Calu3 (cell line): ENCODE measurements at regions of chr15 and their contacts with region 1.

Region 1: GRCh38 chr15:76299786-76300185 is 11.5 kb downstream of the ETFA start:
- DNase-seq: no peak
- H3K4me3 Mint-ChIP-seq: no peak overlapping the region
- H3K27ac Mint-ChIP-seq: no peak overlapping the region
- H3K4me1 Mint-ChIP-seq: no peaks in the 10 kb centered on the region
- H3K27me3 Mint-ChIP-seq: no peaks in the 10 kb centered on the region
- CTCF ChIP-seq: no peak

Region 2: GRCh38 chr15:76235186-76235826 is 64.5 kb before region 1 on chr15:
- CTCF ChIA-PET with region 1: no interaction called
- intact Hi-C with region 1: no loop called
- DNase-seq: no peak
- H3K4me3 Mint-ChIP-seq: no peak overlapping the region
- H3K27ac Mint-ChIP-seq: no peak overlapping the region
- H3K4me1 Mint-ChIP-seq: no peaks in the 10 kb centered on the region
- H3K27me3 Mint-ChIP-seq: no peaks in the 10 kb centered on the region
- CTCF ChIP-seq: peak; percentile 9

Region 3: DNA sequence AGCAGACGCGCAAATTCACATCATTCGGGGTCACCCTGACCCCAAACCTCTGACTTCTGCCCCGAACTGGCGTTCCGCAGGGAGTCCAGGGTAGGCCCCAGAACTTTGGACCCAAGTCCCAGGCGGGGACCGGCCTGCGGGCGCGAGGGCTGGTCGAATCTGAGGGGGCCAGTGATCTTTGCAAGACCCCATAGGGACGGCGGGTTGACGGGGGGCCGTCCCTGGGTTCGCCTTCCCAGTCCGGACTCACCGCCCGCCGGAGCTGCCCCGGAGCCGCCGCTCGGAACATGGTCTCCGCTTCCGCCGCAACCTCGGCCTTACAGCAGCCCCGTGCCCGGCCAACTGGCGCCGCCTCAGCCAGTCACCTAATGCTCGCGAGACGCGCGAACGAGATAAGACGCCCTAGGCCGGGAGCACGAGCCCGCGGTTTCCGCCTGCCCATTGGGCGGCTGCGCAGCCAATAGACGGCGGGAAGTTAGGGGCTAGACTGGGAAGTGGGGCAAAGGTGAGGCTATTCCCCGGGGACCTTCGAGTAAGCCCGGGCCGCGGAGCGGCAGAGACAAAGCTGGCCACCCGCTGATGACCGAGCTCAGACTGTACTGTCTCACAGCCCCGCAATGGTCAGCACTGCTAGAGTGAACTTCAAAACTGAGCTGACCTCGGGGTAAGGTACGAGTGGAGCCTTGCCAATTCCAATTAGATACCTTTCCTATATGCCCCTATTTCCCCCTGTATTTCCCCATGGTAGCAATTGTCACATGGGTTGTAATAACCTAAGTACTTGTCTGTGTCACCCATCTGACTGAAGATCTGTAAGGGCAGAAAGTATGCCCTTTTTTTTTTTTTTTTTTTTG is 11.5 kb after region 1 on chr15 and contains the start of gene ETFA:
- CTCF ChIA-PET with region 1: interaction called, 12 read pairs
- intact Hi-C with region 1: no loop called
- DNase-seq: peak; percentile 98
- H3K4me3 Mint-ChIP-seq: peak within 1 kb of the TSS; percentile 43
- H3K27ac Mint-ChIP-seq: peak within 1 kb of the TSS; percentile 81
- H3K4me1 Mint-ChIP-seq: peaks cover 43% of the 10 kb centered on the region
- H3K27me3 Mint-ChIP-seq: no peaks in the 10 kb centered on the region
- CTCF ChIP-seq: no peak
- total RNA-seq, gene ETFA: 230 and 252 TPM in 2 replicates